Heart right ventricle (tissue), 16 donors: ENCODE measurements at regions of chr1 and their contacts with region 1.

Region 1: DNA sequence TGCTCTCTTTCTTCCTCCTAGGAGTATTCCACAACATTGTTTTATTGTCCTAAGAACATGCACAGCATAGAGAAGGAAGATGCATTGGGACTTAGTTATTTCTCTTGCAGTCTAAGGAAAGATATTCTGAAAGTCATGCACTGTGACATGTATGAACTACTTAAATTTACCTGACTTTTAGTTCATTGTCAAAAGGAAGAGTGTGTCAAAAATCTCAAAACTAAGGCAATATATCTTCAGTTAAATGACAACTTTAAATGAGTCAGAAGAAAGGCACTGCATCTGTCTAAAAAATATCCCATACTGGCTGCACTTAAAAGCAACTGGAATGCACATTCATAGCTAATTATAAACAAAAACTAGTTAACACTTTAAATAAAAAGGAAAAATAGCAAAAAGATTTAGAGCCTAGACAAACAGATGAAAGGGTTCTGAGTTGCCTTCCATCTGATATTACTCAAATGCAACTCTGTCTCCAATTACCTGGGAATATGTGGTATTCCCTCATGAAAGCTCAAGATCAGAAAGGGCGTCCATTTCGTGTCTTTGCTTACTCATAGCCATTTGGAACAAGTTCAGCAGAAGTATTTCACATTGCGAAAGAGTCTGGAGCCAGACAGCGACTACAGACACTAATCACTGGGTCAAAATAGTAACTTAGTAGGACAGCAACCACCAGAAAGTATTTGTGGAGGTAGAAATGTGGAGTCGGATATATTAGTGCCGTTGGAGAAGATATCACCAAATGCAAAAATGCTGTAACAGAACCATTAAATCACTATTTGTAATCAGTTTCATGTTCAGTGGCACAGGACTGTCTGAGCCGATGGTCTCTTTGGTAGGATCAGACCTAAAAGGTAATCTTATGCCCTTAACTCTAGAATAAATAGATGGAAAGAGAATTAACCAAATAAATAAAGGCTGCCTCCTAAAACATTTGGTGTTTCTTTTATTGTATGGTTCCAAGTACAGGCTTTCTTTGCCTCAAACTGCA is 225.7 kb downstream of the GREM2 start:
- DNase-seq: no peak
- ATAC-seq: peak in 1 of 8 donors; percentile 44
- H3K4me3 ChIP-seq: no peak overlapping the region
- H3K27ac ChIP-seq: no peak overlapping the region
- H3K4me1 ChIP-seq: no peaks in the 10 kb centered on the region
- H3K27me3 ChIP-seq: no peaks in the 10 kb centered on the region
- CTCF ChIP-seq: no peak

Region 2: DNA sequence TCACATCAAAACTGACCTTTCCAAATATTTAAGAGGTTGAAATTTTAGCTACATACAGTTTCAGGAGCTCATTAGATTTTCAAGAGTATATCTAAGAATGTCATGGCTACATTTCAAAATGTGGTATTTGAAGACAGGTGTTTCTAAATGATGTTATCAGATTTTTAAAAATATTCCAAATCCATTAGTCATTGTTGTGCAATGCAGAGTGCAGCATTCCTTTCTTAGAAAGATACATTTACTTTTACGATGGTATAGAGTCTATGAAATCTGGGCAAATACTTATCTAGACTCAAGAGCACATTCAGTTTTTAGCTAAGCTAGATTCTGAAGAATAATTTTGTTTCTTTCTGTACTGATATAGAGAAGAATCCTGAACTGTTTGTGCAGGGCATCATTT is 769.6 kb before region 1 on chr1:
- intact Hi-C with region 1: loop called in 1 of 10 experiments (anchors 5 kb)
- DNase-seq: no peak
- ATAC-seq: no peak
- H3K4me3 ChIP-seq: no peak overlapping the region
- H3K27ac ChIP-seq: no peak overlapping the region
- H3K4me1 ChIP-seq: no peaks in the 10 kb centered on the region
- H3K27me3 ChIP-seq: no peaks in the 10 kb centered on the region
- CTCF ChIP-seq: no peak

Region 3: GRCh38 chr1:240363315-240363714 is 23.0 kb before region 1 on chr1:
- intact Hi-C with region 1: no loop called
- DNase-seq: no peak
- ATAC-seq: no peak
- H3K4me3 ChIP-seq: no peak overlapping the region
- H3K27ac ChIP-seq: no peak overlapping the region
- H3K4me1 ChIP-seq: no peaks in the 10 kb centered on the region
- H3K27me3 ChIP-seq: no peaks in the 10 kb centered on the region
- CTCF ChIP-seq: no peak

Region 4: DNA sequence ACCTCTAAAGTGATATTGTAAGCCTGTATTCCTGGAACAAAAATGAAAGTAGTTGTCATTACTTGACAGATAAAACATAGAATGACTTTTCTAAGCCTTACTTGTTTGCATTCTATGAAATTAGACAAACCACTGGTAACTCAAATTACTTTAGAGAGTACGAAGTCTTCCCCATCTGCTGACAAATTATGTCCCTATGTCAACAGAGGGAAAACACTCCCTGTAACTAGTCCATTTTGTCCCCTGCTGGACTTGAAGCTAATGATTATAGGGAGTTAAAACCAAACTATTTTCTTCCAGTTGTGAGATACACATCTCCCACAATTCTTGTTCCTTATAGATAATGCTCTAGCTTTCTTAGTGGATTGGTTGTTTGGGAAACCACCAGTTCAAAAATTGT is 186.0 kb after region 1 on chr1:
- intact Hi-C with region 1: no loop called
- DNase-seq: no peak
- ATAC-seq: no peak
- H3K4me3 ChIP-seq: no peak overlapping the region
- H3K27ac ChIP-seq: no peak overlapping the region
- H3K4me1 ChIP-seq: no peaks in the 10 kb centered on the region
- H3K27me3 ChIP-seq: no peaks in the 10 kb centered on the region
- CTCF ChIP-seq: no peak

Region 5: GRCh38 chr1:240582953-240583352 is 196.7 kb after region 1 on chr1:
- intact Hi-C with region 1: no loop called
- DNase-seq: no peak
- ATAC-seq: no peak
- H3K4me3 ChIP-seq: no peak overlapping the region
- H3K27ac ChIP-seq: no peak overlapping the region
- H3K4me1 ChIP-seq: no peaks in the 10 kb centered on the region
- H3K27me3 ChIP-seq: peaks cover 0 to 3% (median 0%) of the 10 kb centered on the region in 7 donors
- CTCF ChIP-seq: no peak